ENCODE measurements at regions of chr20 and their contacts with region 1.

Region 1: DNA sequence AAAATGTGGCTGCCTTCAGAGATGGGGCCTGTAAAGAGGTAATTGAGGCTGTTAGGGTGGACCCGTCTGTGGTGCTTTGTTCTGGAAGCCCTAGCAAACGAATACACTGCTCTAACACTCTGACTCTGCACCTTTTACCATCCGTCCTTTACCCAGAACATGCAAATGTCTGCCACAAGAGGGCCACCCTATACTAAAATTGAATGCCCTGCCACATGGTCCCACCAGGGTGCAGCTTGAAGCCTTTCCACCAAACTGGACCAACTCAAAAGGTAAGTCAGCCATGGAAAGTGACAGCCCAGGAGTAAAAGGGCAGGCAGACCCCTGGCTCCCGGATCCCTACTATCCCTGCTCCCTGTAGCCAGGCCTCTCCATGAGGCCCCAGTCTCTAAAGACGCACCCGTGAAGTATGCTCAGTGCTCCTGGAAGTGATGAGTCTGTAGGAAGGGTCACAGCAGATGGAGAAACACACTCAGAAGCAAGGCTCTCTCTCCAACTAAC is 5.8 kb upstream of the BFSP1 start:
- DNase-seq: peak; percentile 16 to 88 (median 71)

Region 2: GRCh38 chr20:17407550-17407949 is 129.4 kb before region 1 on chr20:
- intact Hi-C with region 1: no loop called
- DNase-seq: no peak

Region 3: DNA sequence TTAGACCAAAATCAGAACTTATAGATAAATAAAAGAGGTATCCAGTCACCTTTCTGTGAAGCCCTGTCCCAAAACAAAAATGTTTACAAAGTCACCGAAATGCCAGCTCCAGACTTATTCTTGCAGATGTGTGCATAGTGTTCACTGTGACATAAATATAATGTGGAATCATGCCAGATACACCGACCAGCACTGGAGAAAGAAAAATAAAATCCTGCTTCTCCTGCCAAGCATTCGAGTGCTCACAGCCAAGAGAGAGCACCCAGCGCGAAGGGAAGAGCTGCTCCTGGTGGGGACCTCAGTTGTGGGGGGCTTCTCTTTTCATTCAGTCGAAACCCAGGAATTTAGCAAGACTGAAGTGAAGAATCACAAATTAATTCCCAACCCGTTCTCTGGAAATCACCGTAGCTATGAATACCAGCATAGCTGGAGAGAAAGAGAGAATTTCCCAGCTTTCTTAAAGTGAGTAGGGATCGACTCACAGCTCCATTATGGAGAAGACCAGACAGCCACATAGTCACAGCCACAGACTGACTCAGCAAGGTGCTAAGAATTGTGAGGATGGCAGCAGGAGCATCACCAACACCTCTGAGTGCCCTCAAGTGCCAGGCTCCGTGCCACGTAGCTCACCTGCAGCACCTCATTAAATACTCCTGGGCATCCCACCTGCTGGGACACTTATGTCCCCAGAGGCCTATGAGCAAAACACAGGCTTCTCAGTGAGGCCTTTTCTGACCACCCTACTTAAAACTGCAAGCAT is 39.0 kb before region 1 on chr20:
- intact Hi-C with region 1: no loop called
- DNase-seq: peak in 2 of 42 donors; percentile 15 to 32

Region 4: GRCh38 chr20:17617551-17618223 is 80.7 kb after region 1 on chr20:
- intact Hi-C with region 1: loop called (anchors 5 kb)
- DNase-seq: peak in 40 of 42 donors; percentile 37 to 88 (median 74)

Region 5: DNA sequence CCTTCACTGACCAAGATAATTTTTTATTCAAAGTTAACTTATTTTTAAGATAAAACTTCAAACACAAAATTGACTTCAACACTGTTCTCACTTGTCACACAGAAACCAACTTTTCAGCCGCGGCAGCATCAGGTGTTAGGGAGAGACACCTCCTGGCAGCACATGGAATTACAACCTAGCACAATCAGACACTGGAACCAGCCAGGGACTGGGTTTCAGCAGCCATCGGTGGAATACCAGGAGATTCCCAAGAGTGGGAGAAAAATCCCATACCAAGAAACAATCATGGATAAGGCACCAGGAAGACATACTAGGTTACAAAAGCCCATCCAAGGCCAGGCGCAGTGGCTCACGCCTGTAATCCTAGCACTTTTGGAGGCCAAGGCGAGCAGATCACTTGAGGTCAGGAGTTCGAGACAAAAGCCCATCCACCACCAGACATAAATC is 361.6 kb after region 1 on chr20:
- intact Hi-C with region 1: loop called (anchors 10 kb)
- DNase-seq: peak; percentile 38 to 90 (median 75)

Measured in head of caudate nucleus (tissue), 42 donors.